Activated CD8-positive, alpha-beta T cell treated with anti-CD3 and anti-CD28 coated beads, Interleukin-2, amount 10 ng/mL, durations not matched to agents 7 days and 5 days (primary cell): ENCODE measurements at regions of chr7 and their contacts with region 1.

Region 1: GRCh38 chr7:139075031-139075652 is 34.4 kb downstream of the ZC3HAV1 start:
- DNase-seq: peak; percentile 86
- ATAC-seq: peak; percentile 58
- H3K4me3 Mint-ChIP-seq: peak overlapping the region; percentile 46
- H3K27ac Mint-ChIP-seq: peak overlapping the region; percentile 86
- H3K4me1 Mint-ChIP-seq: peaks cover 76% of the 10 kb centered on the region
- H3K27me3 Mint-ChIP-seq: no peaks in the 10 kb centered on the region

Region 2: GRCh38 chr7:138666385-138666784 is 408.8 kb before region 1 on chr7:
- CTCF ChIA-PET with region 1: no interaction called
- POLR2A ChIA-PET with region 1: no interaction called
- DNase-seq: no peak
- ATAC-seq: no peak
- H3K4me3 Mint-ChIP-seq: no peak overlapping the region
- H3K27ac Mint-ChIP-seq: no peak overlapping the region
- H3K4me1 Mint-ChIP-seq: peaks cover 35% of the 10 kb centered on the region
- H3K27me3 Mint-ChIP-seq: peaks cover 28% of the 10 kb centered on the region

Region 3: DNA sequence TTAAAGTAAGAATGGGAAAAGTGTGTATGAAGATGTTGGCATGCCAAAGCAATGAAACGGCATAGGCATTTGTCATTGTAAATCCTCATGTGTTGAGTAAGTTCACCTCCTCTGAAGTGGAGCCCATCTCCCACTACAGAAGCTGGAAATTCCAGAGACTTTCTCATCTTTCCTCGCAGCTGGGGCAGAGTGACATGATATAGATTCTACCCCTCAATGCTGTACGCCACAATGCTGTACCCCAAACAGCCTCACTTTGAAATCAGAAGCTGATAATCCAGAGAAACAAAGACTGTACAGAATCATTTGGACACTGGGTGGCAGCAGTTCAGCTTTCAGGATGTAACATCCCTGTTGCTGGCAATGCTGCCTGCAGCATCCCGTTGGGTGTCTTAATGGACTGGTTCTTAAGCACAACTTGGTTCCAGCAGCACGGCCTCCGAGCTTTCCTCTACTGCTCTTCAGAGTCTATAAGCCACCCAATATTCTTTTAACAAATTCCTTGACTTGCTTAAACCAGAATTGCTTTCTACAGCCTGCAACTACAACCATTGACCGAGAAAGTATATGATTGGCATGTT is 58.1 kb before region 1 on chr7:
- CTCF ChIA-PET with region 1: interaction called, 38 read pairs
- POLR2A ChIA-PET with region 1: interaction called, 3 read pairs
- DNase-seq: peak; percentile 81
- ATAC-seq: peak; percentile 100
- H3K4me3 Mint-ChIP-seq: no peak overlapping the region
- H3K27ac Mint-ChIP-seq: no peak overlapping the region
- H3K4me1 Mint-ChIP-seq: peaks cover 12% of the 10 kb centered on the region
- H3K27me3 Mint-ChIP-seq: peaks cover 9% of the 10 kb centered on the region

Region 4: DNA sequence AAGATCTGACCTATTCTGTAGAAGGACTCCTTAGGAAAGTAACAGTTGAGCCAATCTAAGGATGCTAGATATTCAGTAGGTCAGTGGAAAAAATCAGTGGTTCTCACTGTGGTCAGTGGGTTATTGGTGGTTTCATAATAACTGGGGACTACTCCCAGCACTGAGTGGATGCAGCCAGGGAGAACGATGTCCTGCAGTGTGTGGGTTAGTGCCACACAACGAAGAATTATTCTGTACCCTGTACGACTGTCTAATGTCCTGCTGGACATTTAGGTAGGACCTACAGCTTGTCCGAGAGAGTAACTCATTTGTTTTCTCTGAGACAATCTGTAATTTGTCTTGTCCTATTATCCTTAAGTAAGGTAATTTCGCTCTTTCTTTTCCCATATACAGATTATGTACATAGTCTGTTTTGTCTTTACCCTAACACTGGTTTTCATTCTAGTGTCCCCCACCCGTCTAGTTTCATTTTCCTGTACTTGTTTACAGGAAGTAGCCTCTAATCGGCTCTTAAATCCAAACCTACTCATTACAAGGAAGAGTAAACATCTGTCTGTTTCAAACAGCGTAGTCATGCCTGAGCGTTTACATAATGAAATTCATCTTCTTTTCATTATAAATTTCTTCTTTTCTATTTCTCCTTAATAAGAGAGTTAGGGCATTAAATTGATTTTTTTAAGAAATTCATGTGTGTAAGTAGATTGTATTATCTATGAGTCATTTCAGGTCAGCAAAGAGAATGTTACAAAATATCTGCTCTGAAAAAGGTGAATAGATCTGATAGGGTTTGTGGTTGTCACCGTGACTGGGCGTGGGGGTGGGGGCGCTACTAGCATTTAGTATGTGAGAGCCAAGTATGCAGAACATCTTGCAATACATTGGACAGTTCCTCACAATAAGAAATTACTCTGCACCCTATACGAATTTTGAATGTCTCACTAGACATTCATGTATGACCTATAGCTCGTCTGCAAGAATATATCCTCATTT is 31.0 kb before region 1 on chr7:
- CTCF ChIA-PET with region 1: interaction called, 11 read pairs
- POLR2A ChIA-PET with region 1: interaction called, 4 read pairs
- DNase-seq: peak; percentile 75
- ATAC-seq: peak; percentile 53
- H3K4me3 Mint-ChIP-seq: peak overlapping the region; percentile 57
- H3K27ac Mint-ChIP-seq: peak overlapping the region; percentile 76
- H3K4me1 Mint-ChIP-seq: peaks cover 69% of the 10 kb centered on the region
- H3K27me3 Mint-ChIP-seq: no peaks in the 10 kb centered on the region

Region 5: DNA sequence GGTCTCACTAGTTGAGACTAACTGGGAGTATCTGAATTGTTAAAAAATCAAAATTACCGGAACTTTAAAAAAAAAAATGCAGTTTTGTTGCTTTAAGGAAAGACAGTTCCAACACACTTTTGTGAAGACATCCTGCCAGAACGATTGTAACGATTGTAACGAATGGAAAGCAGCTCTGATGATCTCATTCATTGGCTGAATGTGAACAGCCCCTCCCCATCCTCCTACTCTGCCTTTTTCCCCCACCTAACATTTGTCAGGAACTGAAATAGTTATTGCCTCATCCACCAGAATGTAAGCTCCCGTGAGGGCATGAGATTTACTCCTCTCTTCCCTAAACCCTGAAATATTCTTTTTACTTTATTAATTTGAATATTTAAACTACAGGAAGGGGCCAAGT is 16.2 kb before region 1 on chr7:
- CTCF ChIA-PET with region 1: interaction called, 36 read pairs
- POLR2A ChIA-PET with region 1: interaction called, 6 read pairs
- DNase-seq: no peak
- ATAC-seq: no peak
- H3K4me3 Mint-ChIP-seq: no peak overlapping the region
- H3K27ac Mint-ChIP-seq: peak overlapping the region; percentile 47
- H3K4me1 Mint-ChIP-seq: peaks cover 46% of the 10 kb centered on the region
- H3K27me3 Mint-ChIP-seq: no peaks in the 10 kb centered on the region

Region 6: DNA sequence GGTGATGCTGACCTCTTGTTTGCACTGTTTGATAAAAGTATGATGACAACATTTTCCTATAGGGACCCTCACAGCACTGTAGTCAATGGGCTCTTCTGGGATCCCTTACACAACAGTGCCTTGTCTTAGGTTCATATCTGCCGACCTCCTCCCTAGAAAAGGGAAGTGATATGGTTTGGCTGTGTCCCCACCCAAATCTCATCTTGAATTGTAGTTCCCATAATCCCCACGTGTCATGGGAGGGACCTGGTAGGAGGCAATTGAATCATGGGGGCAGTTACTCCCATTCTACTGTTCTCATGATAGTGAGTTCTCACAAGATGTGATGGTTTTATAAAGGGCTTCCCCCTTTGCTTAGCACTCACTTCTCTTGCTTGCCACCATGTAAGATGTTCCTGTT is 11.3 kb after region 1 on chr7:
- CTCF ChIA-PET with region 1: interaction called, 31 read pairs
- POLR2A ChIA-PET with region 1: interaction called, 5 read pairs
- DNase-seq: no peak
- ATAC-seq: no peak
- H3K4me3 Mint-ChIP-seq: no peak overlapping the region
- H3K27ac Mint-ChIP-seq: peak overlapping the region; percentile 45
- H3K4me1 Mint-ChIP-seq: peaks cover 85% of the 10 kb centered on the region
- H3K27me3 Mint-ChIP-seq: no peaks in the 10 kb centered on the region

Region 7: DNA sequence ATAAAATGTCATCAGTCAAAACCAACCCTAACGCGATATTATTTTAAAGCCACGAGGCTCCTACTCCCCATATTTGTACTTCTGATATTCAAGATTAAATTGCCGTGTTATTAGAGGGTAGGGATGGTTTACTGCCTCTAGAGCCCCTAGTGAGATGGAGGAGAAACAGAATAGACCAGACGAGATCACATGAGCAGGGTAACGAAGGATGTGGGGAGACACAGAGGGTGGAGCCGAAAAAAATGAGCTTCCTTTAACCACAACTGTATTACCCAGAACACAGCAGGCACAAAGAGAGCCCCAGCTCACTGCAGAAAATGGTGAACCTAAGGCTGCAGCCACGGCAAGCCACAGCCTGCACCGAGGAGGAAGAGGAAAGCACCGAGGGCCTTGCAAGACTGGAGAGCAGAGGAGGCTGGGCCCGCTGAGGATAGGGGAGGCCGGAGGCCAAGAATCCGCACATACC is 20.1 kb after region 1 on chr7:
- CTCF ChIA-PET with region 1: interaction called, 43 read pairs
- POLR2A ChIA-PET with region 1: interaction called, 11 read pairs
- DNase-seq: peak; percentile 92
- ATAC-seq: peak; percentile 84
- H3K4me3 Mint-ChIP-seq: peak overlapping the region; percentile 78
- H3K27ac Mint-ChIP-seq: peak overlapping the region; percentile 92
- H3K4me1 Mint-ChIP-seq: peaks cover 87% of the 10 kb centered on the region
- H3K27me3 Mint-ChIP-seq: no peaks in the 10 kb centered on the region

Region 8: DNA sequence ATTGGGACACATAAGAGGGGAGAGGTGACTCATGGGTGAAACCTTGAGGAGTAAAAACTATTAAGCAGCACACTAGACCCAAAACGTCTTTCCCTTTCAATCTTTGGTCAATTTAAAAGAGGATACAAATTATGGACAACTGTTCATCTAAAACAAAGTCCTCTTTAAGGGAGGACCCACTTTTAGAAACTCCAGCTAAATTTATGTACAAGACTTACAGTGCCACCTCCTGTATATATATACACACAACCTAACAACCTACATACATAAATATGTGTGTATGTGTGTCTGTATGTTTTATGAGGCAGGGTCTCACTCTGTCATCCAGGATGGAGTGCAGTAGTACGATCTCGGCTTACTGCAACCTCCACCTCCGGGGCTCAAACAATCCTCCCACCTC is 52.5 kb after region 1 on chr7:
- CTCF ChIA-PET with region 1: interaction called, 13 read pairs
- POLR2A ChIA-PET with region 1: no interaction called
- DNase-seq: no peak
- ATAC-seq: no peak
- H3K4me3 Mint-ChIP-seq: no peak overlapping the region
- H3K27ac Mint-ChIP-seq: no peak overlapping the region
- H3K4me1 Mint-ChIP-seq: peaks cover 26% of the 10 kb centered on the region
- H3K27me3 Mint-ChIP-seq: peaks cover 5% of the 10 kb centered on the region